Sciatic nerve (tissue), 2 donors: ENCODE measurements at regions of chr9 and their contacts with region 1.

Region 1: DNA sequence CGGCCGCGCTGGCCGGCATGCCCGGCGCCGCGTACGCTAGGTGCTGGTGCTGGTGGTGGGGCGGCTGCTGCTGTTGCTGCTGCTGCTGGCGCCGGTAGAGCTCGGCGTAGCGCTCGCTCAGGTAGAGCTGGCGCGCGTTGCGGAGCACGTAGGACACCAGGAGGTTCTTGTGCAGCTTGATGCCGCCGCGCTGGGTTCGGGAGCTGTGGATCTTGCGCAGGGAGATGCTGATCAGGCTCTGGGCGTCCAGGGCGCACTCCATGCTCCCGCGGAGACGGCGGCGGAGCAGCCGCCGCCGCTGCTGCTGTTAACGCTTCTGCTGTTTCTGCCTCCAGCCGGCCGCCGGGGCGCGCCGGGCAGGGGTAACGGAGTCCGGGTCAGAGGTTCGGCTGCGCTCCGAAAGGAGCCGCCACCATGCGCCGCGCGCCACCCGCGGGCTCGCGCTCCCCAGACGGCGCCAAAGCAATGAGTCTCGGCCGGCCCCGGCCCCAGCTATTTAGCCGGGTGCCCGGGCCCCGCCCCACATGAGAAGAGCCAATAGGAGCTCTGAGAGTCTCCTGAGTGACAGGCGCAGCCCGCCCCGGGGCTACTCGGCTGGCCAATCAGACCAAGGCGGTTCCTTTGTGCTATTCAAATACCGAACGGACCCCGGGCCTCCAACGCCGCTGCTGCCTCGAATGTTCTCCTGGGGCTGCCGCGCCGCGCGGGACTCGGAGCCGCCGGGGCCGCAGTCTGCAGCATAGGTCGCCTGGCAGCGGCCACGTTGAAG is at the start of gene IER5L:
- DNase-seq: peak; percentile 98
- ATAC-seq: peak; percentile 85
- total RNA-seq, gene IER5L: 39.3 TPM

Region 2: GRCh38 chr9:128902351-128903078 is 275.5 kb before region 1 on chr9:
- intact Hi-C with region 1: no loop called
- DNase-seq: no peak
- ATAC-seq: peak; percentile 20

Region 3: DNA sequence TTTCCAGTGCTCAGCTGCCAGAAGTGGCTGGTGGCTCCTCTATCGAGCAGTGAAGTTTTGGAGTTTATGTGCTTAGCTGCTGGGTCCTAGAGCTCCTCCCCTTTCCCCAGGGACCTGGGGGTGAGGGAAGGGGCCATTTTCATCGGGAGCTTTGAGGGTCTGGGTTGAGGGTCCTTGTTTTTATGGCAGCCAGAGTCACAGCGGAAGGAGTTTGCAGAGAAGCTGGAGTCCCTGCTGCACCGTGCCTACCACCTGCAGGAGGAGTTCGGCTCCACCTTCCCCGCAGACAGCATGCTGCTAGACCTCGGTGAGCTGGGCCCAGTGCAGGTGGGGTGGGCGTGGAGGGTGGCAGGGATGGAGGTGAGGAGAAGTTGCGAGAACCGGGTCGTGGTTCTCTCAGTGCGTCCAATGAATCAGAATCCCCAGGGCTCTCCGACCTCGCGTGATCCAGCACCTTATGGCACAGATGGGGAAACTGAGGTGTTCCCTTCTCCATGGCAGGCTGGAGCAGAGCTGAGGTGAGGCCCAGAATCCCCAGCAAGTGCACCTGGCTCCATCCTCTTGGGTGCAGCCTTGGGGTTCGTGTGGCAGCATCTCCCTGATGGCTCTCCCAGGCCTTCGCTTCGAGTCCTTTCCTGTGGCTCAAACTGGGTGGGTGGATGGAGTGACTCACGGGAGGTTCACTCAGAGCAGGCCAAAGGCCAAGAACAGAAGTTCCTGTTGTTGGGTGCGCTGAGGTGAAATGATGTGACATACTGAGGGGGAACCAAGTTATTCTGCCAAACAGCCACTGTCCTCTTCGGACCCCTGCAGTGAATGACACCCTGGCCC is 118.8 kb before region 1 on chr9:
- intact Hi-C with region 1: no loop called
- DNase-seq: no peak
- ATAC-seq: no peak

Region 4: DNA sequence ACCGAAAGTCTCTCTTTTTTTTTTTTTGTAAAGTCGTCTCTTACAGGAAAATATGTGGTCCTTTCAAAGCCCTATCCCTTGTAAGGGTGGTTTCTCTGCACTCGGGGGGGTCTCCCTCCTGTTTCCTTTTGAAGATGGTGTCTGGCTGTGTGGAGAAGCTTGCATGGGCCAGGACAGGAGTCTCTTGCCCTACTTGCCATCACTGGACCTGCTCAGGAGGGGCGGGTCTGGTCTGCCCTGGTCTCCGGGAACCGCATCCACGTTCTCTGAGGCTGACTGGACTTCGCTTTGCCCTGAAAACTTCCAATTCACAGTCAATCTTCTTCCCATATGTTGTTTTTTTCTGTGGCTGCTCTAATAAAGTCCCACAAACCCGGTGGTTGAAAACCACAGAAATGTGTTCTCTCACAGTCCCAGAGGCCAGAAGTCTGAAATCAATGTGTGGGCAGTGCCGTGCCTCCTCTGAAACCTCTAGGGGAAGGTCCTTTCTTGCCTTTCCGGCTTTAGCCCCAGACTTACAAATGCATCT is 93.0 kb after region 1 on chr9:
- intact Hi-C with region 1: no loop called
- DNase-seq: no peak
- ATAC-seq: peak; percentile 52

Region 5: GRCh38 chr9:129333953-129334724 is 156.2 kb after region 1 on chr9:
- intact Hi-C with region 1: loop called (anchors 10 kb)
- DNase-seq: peak; percentile 94
- ATAC-seq: peak; percentile 91

Region 6: DNA sequence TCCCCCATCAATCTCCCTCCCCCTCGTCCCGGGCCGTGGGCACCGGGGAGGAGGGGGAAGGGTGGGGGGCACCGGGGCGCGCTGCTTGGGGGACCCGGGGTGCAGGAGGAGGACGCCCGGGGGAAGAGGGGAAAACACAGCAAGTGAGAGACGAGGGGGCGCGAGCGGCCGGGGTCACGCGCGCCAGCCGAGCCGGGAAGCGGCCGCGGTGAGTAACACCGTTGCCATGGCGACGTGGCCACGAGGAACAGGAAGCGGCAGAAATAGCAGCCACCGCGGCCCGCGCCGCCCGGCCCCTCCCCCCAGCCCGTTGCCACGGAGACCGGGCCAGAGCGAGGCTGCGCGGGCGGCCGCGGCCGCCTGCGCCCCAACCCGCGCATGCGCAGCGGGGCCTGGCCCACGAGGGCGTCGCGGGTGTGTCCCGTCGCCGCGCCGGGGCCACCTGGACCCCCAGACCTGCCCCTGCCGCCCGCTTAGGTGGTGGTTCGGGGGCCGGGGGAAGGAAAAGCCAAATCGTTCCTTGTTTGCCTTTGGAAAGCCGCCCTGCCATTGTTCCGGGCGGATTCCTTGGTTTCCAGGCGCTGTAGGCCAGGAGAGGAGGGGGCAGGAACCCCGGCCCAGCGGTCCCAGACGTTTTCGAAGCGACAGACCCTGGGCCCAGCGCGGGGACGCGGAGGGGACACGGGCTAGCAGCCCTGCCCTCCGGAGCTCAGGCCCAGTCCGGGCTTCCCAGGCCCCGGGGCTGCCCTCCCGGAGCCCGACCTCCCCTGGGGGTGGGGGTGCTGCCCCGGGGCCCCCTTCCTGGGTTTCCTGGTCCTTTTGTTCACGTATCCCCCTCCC is 235.8 kb after region 1 on chr9:
- intact Hi-C with region 1: loop called (anchors 5 kb)
- DNase-seq: peak; percentile 100
- ATAC-seq: peak; percentile 91

Region 7: DNA sequence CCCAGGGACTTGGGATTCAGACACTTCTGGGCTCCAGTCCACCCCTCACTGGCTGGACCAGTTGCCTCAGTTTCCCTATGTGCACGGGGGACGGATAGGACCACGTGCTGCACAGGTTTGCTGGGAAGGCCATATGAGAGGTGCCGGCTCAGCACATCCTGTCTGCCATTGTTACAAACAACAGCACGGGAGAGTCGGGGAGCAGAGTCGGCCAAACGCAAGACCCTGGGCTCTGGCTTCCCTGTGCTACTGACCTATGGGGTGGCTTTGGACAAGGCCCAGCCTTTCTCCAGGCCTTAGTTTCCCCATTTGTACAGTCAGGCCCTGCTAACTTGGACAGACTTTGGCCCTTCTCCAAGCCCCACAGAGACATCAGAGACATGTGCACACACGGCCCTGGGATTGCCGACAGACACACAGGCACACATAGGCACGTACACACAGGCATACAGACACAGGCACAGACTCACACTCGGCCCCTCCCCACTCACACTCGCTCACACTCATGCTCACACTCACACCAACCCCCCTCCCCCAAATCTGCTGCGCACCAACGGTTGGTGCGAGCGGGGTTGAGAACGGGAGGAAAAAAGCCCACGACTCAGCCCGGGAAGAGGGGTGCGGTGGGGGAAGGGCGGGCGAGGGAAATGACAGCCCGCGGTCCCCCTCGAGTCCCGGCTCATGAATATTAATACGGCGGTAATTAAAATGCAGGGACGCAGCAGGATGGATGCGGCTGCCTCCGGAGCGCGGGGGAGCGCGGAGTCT is 309.9 kb after region 1 on chr9:
- intact Hi-C with region 1: loop called (anchors 5 kb)
- DNase-seq: no peak
- ATAC-seq: peak; percentile 4

Region 8: GRCh38 chr9:129624168-129624759 is 446.3 kb after region 1 on chr9:
- intact Hi-C with region 1: loop called (anchors 5 kb)
- DNase-seq: no peak
- ATAC-seq: peak; percentile 3